A549 (cell line): ENCODE measurements at regions of chr17 and their contacts with region 1.

Region 1: GRCh38 chr17:29116804-29117772 is 63.1 kb downstream of the MYO18A start:
- DNase-seq: peak; percentile 76 to 82
- ATAC-seq: peak; percentile 65 to 82
- H3K4me3 ChIP-seq: no peak overlapping the region
- H3K27ac ChIP-seq: no peak overlapping the region
- H3K4me1 ChIP-seq: no peaks in the 10 kb centered on the region
- CTCF ChIP-seq: peak; percentile 94
- EP300 ChIP-seq: no peak
- POLR2A ChIP-seq: no peak
- RAD21 ChIP-seq: peak; percentile 75 to 82

Region 2: GRCh38 chr17:28982131-28982951 is 134.7 kb before region 1 on chr17:
- CTCF ChIA-PET with region 1: interaction called, 29 read pairs
- POLR2A ChIA-PET with region 1: no interaction called
- DNase-seq: no peak
- ATAC-seq: no peak
- H3K4me3 ChIP-seq: no peak overlapping the region
- H3K27ac ChIP-seq: no peak overlapping the region
- H3K4me1 ChIP-seq: no peaks in the 10 kb centered on the region
- CTCF ChIP-seq: no peak
- EP300 ChIP-seq: no peak
- POLR2A ChIP-seq: no peak
- RAD21 ChIP-seq: no peak

Region 3: GRCh38 chr17:29005936-29006511 is 111.1 kb before region 1 on chr17 and contains the start of gene SEZ6:
- CTCF ChIA-PET with region 1: interaction called, 34 read pairs
- POLR2A ChIA-PET with region 1: no interaction called
- DNase-seq: peak; percentile 65 to 79
- ATAC-seq: peak; percentile 54 to 76
- H3K4me3 ChIP-seq: peak within 1 kb of the TSS; percentile 38
- H3K27ac ChIP-seq: no peak within 1 kb of the TSS
- H3K4me1 ChIP-seq: peaks cover 31% of the 10 kb centered on the region
- CTCF ChIP-seq: no peak
- EP300 ChIP-seq: no peak; a peak in 1 of 5 replicates
- POLR2A ChIP-seq: no peak
- RAD21 ChIP-seq: no peak
- polyA plus RNA-seq, gene SEZ6: not detected in 2 replicates

Region 4: DNA sequence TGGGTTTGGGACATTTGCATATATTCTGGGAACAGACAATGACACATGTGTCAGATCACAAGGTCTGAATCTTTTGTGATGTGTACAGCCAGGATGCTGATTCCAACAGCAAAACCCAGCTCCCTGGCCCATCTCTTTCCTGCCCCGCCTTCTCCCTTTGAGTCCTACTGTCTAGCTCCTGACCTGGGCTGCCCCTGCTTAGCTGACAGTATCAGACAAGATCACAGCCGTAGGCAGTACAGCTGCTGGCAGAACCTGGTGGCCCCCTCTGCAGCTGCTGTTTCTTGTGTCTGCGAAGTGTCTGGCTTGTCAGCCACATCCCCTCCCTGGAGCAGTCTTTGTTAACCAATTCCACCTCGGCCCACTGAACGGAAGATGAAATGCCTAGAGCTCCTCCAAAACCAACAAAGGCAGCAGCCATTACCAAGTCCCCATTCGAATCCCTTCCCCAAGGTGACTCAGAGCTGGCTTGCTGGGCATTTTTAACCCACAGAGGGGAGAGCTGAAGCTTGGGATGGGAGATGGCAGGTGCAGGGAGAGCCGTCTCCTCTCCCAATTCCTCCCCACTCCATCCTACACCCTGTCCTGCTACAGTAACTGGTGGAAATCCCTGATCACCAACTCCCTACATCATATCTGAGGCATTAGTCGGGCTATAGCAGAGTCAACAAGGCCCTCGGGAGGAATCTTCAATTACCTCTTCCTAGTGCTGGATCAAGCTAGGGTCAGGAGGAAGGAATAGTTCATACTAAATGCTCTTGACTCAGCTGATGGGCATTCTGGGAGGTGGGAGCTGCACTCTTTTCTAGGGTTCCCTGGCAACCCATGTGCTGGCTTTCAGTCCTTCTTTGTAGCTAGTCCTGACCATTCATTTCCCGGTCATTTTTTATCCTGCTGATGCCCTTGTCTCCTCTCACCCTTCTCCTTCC is 68.4 kb before region 1 on chr17:
- CTCF ChIA-PET with region 1: interaction called, 14 read pairs
- POLR2A ChIA-PET with region 1: no interaction called
- DNase-seq: no peak
- ATAC-seq: peak in 1 of 2 experiments; percentile 16; a peak in 2 of 6 replicates
- H3K4me3 ChIP-seq: no peak overlapping the region
- H3K27ac ChIP-seq: no peak overlapping the region
- H3K4me1 ChIP-seq: no peaks in the 10 kb centered on the region
- CTCF ChIP-seq: no peak
- EP300 ChIP-seq: no peak
- POLR2A ChIP-seq: no peak
- RAD21 ChIP-seq: no peak

Region 5: DNA sequence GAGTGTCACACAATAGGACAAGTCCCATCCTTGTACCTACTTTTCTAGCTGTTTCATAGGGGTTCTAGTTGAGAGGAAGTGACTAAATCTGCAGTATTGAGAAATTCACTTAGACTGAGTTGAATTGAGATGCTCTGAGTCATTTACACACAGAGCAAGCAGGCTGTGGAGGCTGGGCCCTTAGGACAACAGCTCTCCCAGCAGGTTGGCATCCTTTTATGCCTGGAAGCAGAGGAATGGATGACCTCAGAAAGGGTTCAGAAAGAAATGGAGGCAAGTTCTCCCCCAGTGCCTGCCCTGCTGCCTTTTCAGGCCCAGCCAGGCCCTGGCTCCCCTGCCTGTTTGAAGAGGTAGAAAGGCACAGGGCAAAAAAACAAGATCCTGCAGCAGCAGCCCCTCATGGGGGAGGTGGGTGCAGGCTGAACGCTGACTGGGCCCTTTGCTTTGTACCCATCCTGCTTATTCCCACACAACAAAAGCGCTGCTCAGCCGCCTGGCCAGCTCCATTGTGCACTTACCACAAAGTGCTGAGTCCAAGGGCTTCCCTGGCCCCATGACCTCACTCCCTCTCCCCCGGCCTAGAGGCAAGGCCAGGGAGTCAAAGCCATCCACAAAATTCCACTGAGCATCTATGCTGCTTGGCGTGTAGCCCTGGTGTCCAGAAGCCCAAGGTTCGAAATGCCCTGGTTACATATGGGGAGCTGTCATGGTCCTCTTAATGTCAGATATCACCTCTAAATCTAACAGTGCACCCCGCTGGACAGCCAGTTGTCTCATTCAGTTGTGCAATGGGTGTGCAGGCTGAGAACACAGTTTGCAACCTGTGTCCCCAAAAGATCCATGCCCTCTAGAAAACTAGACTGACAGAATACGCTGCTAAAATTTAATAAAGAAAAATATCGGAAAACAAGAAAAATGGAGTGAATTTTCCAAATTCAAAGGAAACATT is 124.2 kb after region 1 on chr17:
- CTCF ChIA-PET with region 1: interaction called, 13 read pairs
- POLR2A ChIA-PET with region 1: no interaction called
- DNase-seq: peak; percentile 96 to 97
- ATAC-seq: peak; percentile 95 to 98
- H3K4me3 ChIP-seq: no peak overlapping the region
- H3K27ac ChIP-seq: peak overlapping the region; percentile 93
- H3K4me1 ChIP-seq: peaks cover 49% of the 10 kb centered on the region
- CTCF ChIP-seq: no peak
- EP300 ChIP-seq: peak in 1 of 2 experiments; percentile 71; a peak in 1 of 5 replicates
- POLR2A ChIP-seq: no peak
- RAD21 ChIP-seq: peak; percentile 27 to 45; a peak in 2 of 5 replicates